ENCODE measurements at regions of chr11 and their contacts with region 1.

Region 1: DNA sequence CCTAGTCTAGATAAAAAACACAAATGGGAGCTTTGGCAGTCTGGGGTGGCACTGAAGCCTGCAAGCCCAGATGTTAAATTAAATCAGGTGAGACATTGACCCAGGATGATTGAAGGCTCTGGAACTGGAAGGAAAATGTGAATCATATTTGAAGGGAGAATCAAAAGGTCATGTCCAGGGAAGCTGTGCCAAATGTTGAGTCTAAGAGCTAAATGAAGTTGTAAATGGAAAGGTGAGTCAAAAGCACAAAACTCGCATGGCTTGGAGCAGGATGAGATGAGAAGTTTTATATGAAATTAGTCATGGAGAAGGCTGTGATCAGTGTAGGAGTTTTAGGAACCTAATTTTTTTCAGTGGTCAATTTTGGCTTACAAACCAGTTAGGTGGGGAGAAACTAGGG is 301.1 kb downstream of the BLID start:
- DNase-seq: peak; percentile 10
- ATAC-seq: no peak
- H3K4me3 ChIP-seq: no peak overlapping the region
- H3K27ac ChIP-seq: no peak overlapping the region
- H3K4me1 ChIP-seq: peaks cover 0 to 4% of the 10 kb centered on the region in 2 experiments; a peak in 2 of 4 replicates
- H3K27me3 ChIP-seq: no peaks in the 10 kb centered on the region
- CTCF ChIP-seq: no peak
- POLR2A ChIP-seq: no peak
- RAD21 ChIP-seq: no peak

Region 2: DNA sequence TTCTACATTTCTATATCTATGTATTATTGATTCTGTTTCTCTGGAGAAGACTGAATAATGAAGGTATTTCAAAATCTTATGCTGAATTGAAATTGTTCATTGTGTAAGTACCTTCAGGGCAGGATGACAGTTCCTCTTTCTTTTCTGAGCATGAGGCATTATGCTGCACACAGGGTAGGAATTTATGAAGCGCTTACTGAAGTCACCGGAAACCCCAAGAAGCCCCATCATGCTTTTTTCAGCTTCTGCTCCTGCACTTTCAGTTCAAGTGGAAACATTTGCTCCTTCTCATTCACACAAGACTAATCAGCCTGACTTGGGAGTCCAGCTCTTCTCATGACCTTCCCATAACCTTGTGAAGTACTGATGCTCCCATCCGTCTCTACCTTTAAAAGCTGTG is 47.5 kb before region 1 on chr11:
- CTCF ChIA-PET with region 1: no interaction called
- POLR2A ChIA-PET with region 1: no interaction called
- RAD21 ChIA-PET with region 1: no interaction called
- intact Hi-C with region 1: no loop called
- DNase-seq: no peak
- ATAC-seq: no peak
- H3K4me3 ChIP-seq: no peak overlapping the region
- H3K27ac ChIP-seq: no peak overlapping the region
- H3K4me1 ChIP-seq: no peaks in the 10 kb centered on the region
- H3K27me3 ChIP-seq: no peaks in the 10 kb centered on the region
- CTCF ChIP-seq: no peak
- POLR2A ChIP-seq: no peak
- RAD21 ChIP-seq: no peak

Region 3: DNA sequence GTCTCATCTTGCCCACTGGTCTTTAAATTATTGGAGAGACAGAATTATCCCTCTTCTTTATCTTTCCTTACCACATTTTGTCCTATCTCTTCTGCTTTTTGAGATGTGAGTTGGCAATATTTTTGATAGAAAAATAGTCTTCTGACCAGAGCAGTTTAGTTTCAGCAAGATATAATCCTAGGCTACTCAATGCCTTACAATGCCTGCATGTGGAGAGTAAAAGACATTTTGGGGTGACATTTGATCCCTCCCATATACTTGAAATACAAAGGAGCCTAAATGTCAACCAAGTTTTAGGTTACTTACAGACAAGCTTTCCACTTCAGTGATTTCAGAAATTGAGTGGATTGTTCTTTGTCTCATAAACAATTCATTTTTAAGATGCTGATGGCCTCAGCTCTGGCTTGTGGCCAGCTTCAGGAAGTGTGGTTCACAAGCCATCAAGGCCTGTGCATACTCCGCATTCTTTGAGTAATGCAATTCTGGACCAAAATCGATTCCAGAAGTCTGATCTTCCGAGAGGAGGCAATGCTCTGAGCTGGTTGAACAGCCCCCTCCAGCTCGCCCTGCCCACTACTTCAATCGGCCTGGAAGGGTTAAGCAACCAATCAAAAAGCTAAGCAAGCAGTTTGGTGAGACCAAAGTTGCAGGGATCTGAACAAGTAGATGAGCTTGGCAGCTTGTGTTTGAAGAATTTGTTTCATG is 26.7 kb after region 1 on chr11:
- CTCF ChIA-PET with region 1: no interaction called
- POLR2A ChIA-PET with region 1: no interaction called
- RAD21 ChIA-PET with region 1: no interaction called
- intact Hi-C with region 1: loop called (anchors 2 kb)
- DNase-seq: no peak
- ATAC-seq: no peak
- H3K4me3 ChIP-seq: no peak overlapping the region
- H3K27ac ChIP-seq: no peak overlapping the region
- H3K4me1 ChIP-seq: no peaks in the 10 kb centered on the region
- H3K27me3 ChIP-seq: no peaks in the 10 kb centered on the region
- CTCF ChIP-seq: no peak
- POLR2A ChIP-seq: no peak
- RAD21 ChIP-seq: no peak

Measured in HCT116 (cell line).